Ascending aorta (tissue), 2 donors: ENCODE measurements at regions of chr4 and their contacts with region 1.

Region 1: DNA sequence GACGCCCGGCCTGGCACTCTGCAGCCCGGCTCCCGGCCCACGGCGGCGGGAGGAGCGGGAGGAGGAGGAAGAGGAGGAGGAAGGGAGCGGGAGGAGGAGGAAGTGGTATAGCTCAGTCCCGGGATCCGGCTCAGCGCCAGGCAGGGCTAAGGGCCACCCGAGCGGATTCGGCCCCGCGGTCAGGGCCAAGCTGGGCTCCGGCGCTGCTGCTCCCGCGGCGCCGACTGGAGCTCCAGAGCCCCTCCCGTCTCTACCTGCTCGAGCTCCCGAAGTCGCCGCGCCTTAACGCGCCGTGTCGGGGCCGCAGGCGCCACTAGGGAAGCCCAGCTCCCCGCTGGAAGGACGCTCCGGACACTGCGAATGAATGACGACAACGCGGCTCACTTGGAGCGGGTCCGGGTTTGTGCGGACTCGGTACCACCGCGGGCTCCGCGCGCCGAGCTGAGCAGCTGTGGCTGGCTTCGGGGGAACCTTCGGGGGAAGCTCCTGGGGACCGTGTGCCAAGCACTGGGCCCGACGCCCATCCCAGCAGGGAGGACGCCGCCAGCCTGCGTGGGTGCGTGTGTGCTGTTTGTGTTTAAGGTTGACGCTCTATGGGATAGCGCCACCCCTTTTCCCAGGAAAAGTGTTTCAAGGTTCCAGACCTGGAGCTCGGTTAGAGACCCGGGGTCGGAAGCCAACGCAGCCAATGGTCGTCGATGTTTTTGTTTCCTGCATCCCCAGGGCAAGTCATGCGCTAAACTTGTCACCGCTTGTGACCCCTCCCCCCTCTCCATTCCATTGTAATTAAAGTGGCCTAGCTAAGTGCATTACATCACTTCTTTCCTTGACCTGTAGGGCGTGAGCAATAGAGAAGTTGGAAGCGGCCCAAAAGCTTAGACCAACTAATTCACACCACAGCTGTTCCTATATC is at the start of gene TBC1D9:
- DNase-seq: peak; percentile 64 to 91
- H3K4me3 ChIP-seq: peak within 1 kb of the TSS; percentile 76 to 93
- H3K27ac ChIP-seq: peak within 1 kb of the TSS; percentile 96 to 98
- H3K4me1 ChIP-seq: peaks cover 0 to 8% of the 10 kb centered on the region in 2 donors
- H3K27me3 ChIP-seq: no peaks in the 10 kb centered on the region
- CTCF ChIP-seq: no peak
- total RNA-seq, gene TBC1D9: 25.5 TPM

Region 2: DNA sequence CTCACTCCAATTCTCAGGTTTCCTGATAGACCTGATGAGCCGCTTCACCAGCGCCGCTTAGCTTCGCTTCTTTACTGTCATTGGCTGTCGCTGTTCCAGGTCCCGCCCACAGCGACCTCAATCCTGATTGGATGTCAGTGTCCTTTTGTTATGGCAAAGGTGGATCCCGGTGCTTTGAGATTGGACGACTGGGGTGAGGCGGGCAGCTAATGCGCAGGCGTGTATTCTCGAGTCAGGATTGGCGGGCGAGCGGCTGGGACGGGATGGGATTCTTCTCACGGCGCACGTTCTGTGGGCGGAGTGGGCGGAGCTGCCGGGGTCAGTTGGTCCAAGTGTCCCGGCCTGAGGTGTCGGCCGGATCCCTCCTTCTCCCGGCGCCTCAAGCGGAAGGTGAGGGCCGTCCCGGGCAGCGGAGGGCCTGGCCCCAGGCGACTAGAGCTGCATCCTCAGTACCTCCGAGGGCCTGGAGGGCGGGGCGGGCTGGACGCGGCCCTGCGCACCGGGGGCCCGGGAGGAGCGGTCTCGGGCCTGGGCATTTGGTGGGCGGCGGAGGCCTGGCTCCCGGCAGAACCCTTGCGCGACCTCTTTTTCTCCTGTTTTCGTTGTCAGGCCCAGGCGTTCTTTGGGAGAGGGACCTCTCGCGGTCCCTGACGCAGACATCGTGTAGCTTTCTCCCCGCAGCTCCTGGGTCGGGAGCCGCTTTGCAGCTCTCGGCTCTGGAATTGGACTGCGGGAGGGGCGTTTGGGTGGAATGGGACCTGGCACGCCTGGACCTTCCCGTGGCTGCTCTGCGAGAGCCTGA is 383.0 kb before region 1 on chr4 and contains the start of gene SCOC:
- intact Hi-C with region 1: loop called (anchors 10 kb)
- DNase-seq: peak; percentile 99 to 100
- H3K4me3 ChIP-seq: peak within 1 kb of the TSS; percentile 93 to 99
- H3K27ac ChIP-seq: peak within 1 kb of the TSS; percentile 92 to 94
- H3K4me1 ChIP-seq: peaks cover 8 to 15% of the 10 kb centered on the region in 2 donors
- H3K27me3 ChIP-seq: no peaks in the 10 kb centered on the region
- CTCF ChIP-seq: no peak
- total RNA-seq, gene SCOC: 7.2 TPM

Region 3: DNA sequence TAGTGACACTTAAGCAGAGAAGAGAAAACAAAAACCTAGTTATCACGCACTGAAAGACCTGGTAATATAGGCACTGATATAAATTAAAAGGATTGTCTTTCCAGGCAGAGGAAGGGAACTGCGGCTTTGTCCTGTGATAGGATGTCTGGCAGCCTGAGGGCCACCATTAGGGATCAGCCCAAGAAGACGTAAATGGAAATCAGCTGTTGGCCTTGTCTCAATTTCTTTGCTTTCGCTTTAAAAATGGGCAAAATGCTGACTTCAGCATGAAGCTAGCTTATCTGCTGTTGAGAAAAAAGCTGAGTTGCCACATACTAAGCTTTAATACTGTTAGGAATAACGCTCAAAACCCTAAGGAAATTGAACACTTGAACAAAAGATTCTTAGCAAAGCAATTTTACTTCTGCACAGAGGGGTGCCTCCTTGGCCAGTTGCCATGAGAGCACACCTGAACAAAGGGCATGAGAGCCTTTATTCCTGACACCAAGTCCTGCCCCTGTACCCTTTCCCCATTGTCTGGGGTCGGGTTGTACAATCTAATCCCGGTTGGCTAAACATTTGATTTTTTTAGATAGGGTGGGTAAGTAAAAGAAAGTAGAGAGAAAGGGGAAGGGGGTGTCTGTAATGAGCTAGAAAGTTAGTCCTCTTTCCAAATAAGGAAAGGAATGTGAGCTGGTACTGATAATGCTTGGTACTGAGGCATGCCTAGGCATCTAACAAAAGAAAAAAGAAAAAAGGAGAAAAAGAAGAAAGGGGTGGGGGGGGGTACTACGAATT is 102.7 kb before region 1 on chr4:
- intact Hi-C with region 1: loop called (anchors 5 kb)
- DNase-seq: no peak
- H3K4me3 ChIP-seq: peak overlapping the region; percentile 32 to 57
- H3K27ac ChIP-seq: peak overlapping the region; percentile 5 to 27
- H3K4me1 ChIP-seq: no peaks in the 10 kb centered on the region
- H3K27me3 ChIP-seq: no peaks in the 10 kb centered on the region
- CTCF ChIP-seq: no peak

Region 4: GRCh38 chr4:140816806-140817510 is 60.4 kb after region 1 on chr4:
- intact Hi-C with region 1: no loop called
- DNase-seq: no peak
- H3K4me3 ChIP-seq: no peak overlapping the region
- H3K27ac ChIP-seq: no peak overlapping the region
- H3K4me1 ChIP-seq: no peaks in the 10 kb centered on the region
- H3K27me3 ChIP-seq: no peaks in the 10 kb centered on the region
- CTCF ChIP-seq: no peak

Region 5: DNA sequence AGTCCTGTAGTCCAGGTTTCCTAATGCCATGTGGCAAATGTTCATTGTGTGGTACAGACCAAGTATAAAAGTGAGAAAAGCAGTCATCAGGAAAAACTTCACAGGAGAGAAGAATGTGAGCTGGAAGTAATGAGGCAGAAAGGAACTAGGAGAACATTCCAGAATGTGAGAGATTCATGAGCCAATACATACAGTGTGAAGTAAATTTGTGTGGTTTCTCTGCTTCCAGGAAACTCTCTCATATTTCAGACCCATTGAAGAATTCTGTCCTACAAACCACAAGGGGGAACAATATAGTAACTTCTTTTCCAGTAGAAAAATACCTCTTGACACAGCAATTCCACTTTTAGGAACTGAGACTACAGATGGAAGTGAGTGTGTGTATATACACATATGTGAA is 240.2 kb after region 1 on chr4:
- intact Hi-C with region 1: loop called (anchors 5 kb)
- DNase-seq: no peak
- H3K4me3 ChIP-seq: no peak overlapping the region
- H3K27ac ChIP-seq: peak overlapping the region; percentile 9 to 46
- H3K4me1 ChIP-seq: peaks cover 7 to 15% of the 10 kb centered on the region in 2 donors
- H3K27me3 ChIP-seq: no peaks in the 10 kb centered on the region
- CTCF ChIP-seq: no peak